Naive thymus-derived CD4-positive, alpha-beta T cell (primary cell): ENCODE measurements at regions of chr17 and their contacts with region 1.

Region 1: GRCh38 chr17:67469208-67469895 is 92.3 kb downstream of the PITPNC1 start:
- DNase-seq: peak in 2 of 9 donors; percentile 28 to 57
- ATAC-seq: peak; percentile 58
- H3K4me3 ChIP-seq: peak overlapping the region; percentile 53
- H3K4me3 Mint-ChIP-seq: peak overlapping the region; percentile 66 to 90 (median 82)
- H3K27ac ChIP-seq: peak overlapping the region; percentile 74
- H3K27ac Mint-ChIP-seq: peak overlapping the region; percentile 82 to 97 (median 92)
- H3K4me1 ChIP-seq: peaks cover 32 to 63% of the 10 kb centered on the region in 2 donors
- H3K4me1 Mint-ChIP-seq: peaks cover 39 to 84% (median 65%) of the 10 kb centered on the region in 7 donors
- H3K27me3 ChIP-seq: no peaks in the 10 kb centered on the region
- H3K27me3 Mint-ChIP-seq: no peaks in the 10 kb centered on the region

Region 2: GRCh38 chr17:67390646-67391384 is 78.5 kb before region 1 on chr17:
- CTCF ChIA-PET with region 1: interaction called, 33 read pairs
- POLR2A ChIA-PET with region 1: interaction called, 53 read pairs
- intact Hi-C with region 1: no loop called
- DNase-seq: peak in 6 of 9 donors; percentile 50 to 74 (median 62)
- ATAC-seq: peak; percentile 89
- H3K4me3 ChIP-seq: peak overlapping the region; percentile 34
- H3K4me3 Mint-ChIP-seq: peak overlapping the region; percentile 66 to 90 (median 84)
- H3K27ac ChIP-seq: peak overlapping the region; percentile 76
- H3K27ac Mint-ChIP-seq: peak overlapping the region; percentile 85 to 99 (median 95)
- H3K4me1 ChIP-seq: peaks cover 29 to 46% of the 10 kb centered on the region in 2 donors
- H3K4me1 Mint-ChIP-seq: peaks cover 47 to 95% (median 73%) of the 10 kb centered on the region in 7 donors
- H3K27me3 ChIP-seq: no peaks in the 10 kb centered on the region
- H3K27me3 Mint-ChIP-seq: no peaks in the 10 kb centered on the region